ENCODE measurements at regions of chr5 and their contacts with region 1.

Region 1: DNA sequence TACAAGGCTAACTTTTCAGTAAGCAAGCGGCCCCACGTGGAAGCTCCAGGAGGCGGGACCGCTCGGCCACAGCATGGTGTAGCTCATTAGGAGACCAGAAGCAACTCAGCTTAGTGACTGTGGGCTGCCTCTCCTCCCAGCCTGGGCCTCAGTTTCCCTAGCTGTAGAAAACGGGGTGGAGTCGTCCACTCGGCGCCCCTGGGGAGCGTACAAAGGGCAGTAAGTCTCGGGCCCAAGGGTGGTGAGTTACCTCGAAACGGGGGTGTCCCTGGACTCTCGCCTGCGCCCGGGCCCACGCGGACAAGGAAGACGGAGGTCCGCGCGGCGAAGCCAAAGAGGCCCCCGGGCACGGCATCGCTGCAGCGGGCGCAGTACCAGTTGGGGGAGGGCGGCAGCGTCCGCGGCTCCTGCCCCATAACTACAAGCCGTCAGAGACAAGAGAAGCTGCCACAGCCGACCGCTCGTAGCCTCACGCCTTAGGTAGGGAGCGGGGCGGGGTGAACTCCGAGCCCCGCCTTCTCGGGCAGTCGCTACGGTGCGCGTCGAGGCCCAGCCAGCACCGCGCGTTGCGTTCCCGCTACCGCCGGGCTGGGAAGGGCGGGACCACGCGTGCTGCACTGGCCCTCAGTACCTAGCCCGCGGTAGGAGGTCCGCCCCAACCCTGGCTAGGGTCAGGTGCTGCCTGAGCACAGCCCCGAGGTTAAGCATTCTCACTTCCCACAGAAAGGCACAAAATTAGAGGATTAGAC is at the start of gene GEMIN5:
- DNase-seq: peak; percentile 87 to 96
- H3K4me3 ChIP-seq: peak within 1 kb of the TSS; percentile 81 to 97 (median 84)
- H3K27ac ChIP-seq: peak within 1 kb of the TSS; percentile 43 to 83 (median 76)
- H3K4me1 ChIP-seq: peaks cover 26 to 55% (median 43%) of the 10 kb centered on the region in 4 donors
- H3K27me3 ChIP-seq: no peaks in the 10 kb centered on the region
- CTCF ChIP-seq: no peak
- EP300 ChIP-seq: no peak
- POLR2A ChIP-seq: no peak
- total RNA-seq, gene GEMIN5: 2.9 to 13.8 (median 4.9) TPM

Region 2: DNA sequence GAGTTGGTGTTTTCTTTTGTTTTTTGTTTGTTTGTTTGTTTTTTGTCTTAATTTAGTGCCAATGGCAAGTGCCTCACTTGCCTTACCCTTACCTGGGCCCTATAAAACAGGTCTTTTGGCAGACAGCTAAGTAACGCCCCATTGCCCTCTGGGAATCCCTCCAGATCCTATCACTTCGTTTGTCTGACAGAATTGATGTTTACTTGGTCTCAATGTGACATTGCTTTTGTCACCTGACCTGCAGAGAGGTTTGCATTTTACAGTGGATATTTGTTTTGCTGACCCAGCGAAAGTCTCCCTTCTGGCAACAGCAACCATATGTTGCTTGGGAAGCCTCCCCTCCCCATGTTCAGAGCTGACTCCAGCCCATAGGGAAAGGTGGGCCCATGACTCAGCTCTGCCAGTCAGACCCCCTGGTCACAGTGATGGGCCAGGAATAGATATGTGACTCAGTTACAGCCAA is 236.8 kb before region 1 on chr5:
- intact Hi-C with region 1: no loop called
- DNase-seq: peak in 1 of 2 donors; percentile 63
- H3K4me3 ChIP-seq: no peak overlapping the region
- H3K27ac ChIP-seq: peak overlapping the region in 3 of 5 donors; percentile 5 to 38 (median 13)
- H3K4me1 ChIP-seq: peaks cover 4 to 12% (median 11%) of the 10 kb centered on the region in 4 donors
- H3K27me3 ChIP-seq: no peaks in the 10 kb centered on the region
- CTCF ChIP-seq: no peak
- EP300 ChIP-seq: no peak
- POLR2A ChIP-seq: no peak

Region 3: DNA sequence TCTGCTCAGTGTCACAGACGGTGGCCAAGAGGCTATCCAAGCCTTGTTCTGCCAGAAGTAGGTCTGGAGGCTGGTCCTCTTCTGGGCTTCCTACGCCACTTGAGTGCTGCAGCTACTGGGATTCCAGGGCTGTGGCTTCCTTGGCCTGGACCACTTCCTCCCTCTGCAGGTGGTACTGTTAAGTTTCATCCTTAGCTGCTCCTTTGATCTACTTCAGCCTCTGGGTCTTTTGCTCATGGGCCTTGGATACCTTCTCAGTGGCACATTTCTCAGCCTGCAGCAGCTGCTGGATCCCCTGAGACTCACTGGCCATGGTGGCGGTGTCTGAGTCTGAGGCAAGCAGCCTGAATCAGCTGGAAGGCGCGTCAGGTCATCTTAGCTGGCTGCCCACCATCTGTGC is 69.2 kb before region 1 on chr5:
- intact Hi-C with region 1: loop called (anchors 10 kb)
- DNase-seq: peak in 1 of 2 donors; percentile 35
- H3K4me3 ChIP-seq: no peak overlapping the region
- H3K27ac ChIP-seq: no peak overlapping the region
- H3K4me1 ChIP-seq: peaks cover 0 to 29% (median 6%) of the 10 kb centered on the region in 4 donors
- H3K27me3 ChIP-seq: no peaks in the 10 kb centered on the region
- CTCF ChIP-seq: no peak
- EP300 ChIP-seq: no peak
- POLR2A ChIP-seq: no peak

Measured in stomach (tissue), 19 donors.